ENCODE measurements at regions of chr15 and their contacts with region 1.

Region 1: GRCh38 chr15:81274931-81275707 is 48.8 kb downstream of the STARD5 start:
- H3K4me3 ChIP-seq: no peak overlapping the region
- H3K27ac ChIP-seq: no peak overlapping the region
- H3K4me1 ChIP-seq: 0 out of 2 replicates have a peak, but pooled peaks cover 2% of the 10 kb centered on the region
- CTCF ChIP-seq: peak; percentile 83

Region 2: GRCh38 chr15:81286621-81287121 is 11.6 kb after region 1 on chr15:
- CTCF ChIA-PET with region 1: interaction called, 21 read pairs
- POLR2A ChIA-PET with region 1: no interaction called
- H3K4me3 ChIP-seq: no peak overlapping the region
- H3K27ac ChIP-seq: no peak overlapping the region
- H3K4me1 ChIP-seq: no peaks in the 10 kb centered on the region
- CTCF ChIP-seq: no peak

Region 3: DNA sequence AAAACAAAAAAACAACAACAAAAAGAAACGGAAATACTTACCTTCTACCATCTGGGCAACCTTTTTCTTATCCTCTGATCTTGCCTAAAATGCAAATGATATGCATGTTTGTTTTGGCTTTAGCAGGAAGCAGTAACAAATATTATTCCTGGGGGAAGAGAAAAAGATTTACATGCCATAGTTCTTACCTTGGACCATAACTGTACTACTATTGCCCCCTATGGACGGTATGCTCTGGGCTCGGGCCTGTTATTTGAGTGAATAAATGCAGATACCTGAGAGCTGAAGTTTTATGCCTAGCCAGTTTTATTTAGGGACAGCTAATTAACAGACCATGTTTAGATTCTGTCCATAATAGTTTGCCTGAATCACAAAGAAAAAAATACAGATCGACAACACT is 61.4 kb after region 1 on chr15:
- CTCF ChIA-PET with region 1: interaction called, 17 read pairs
- POLR2A ChIA-PET with region 1: no interaction called
- H3K4me3 ChIP-seq: no peak overlapping the region
- H3K27ac ChIP-seq: no peak overlapping the region
- H3K4me1 ChIP-seq: peaks cover 5% of the 10 kb centered on the region; the same call in 1 of the 2 replicates
- CTCF ChIP-seq: no peak

Region 4: GRCh38 chr15:81400640-81401236 is 125.6 kb after region 1 on chr15:
- CTCF ChIA-PET with region 1: interaction called, 199 read pairs
- POLR2A ChIA-PET with region 1: no interaction called
- H3K4me3 ChIP-seq: no peak overlapping the region
- H3K27ac ChIP-seq: no peak overlapping the region
- H3K4me1 ChIP-seq: no peaks in the 10 kb centered on the region
- CTCF ChIP-seq: peak; percentile 48; the same call in 1 of the 2 replicates